ENCODE measurements at regions of chr15 and their contacts with region 1.

Region 1: DNA sequence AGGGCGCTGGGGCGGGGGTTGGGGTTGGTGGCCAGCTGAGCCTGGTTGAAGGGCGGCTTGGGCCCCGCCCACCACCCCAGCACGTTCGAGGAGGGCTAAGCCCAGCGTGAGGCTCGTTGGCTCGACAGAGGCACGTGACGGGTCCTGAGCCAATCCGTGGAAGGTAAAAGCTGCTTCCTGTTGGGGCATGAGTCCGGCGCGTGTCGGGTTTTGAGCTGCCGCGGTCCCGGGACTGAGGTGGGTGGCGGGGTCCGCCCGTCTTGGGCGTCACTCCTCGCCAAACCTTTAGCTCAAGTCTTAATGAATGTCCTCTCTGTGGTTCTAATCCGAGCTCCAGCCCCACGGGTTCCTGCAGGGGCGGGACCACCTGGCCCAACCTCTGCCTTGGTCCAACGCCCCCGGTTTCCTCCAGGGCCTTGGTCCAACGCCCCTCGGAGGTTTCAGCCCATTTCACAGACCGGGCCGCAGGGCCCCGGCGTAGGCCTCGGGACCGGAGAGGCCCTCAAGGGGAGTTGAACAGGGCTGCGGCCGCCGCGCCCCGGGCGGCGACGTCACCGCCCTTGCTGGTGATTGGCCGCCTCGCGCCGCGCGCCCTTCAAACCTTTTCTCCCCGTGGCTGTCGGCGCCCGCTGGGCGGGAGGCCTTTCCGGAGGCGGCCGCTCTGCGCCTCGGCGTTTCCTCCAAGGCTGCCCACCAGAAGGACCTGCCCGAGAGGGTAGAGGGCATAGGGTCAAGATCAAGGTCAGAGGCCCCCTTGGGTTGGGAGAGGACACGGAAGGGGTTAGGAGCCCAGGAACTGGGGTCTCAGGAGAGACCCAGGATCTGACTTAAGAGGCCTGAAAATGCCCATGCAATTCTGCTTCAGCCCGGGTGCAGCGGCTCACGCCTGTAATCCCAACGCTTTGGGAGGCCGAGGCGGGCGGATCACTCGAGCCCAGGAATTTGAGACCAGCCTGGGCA is at the start of gene RCCD1:
- DNase-seq: peak; percentile 97
- H3K4me3 ChIP-seq: peak within 1 kb of the TSS; percentile 76
- H3K27ac ChIP-seq: peak within 1 kb of the TSS; percentile 98
- H3K4me1 ChIP-seq: peaks cover 15% of the 10 kb centered on the region
- H3K27me3 ChIP-seq: no peaks in the 10 kb centered on the region
- CTCF ChIP-seq: no peak
- total RNA-seq, gene RCCD1: 28.8 and 39.5 TPM in 2 replicates

Region 2: GRCh38 chr15:90320061-90320884 is 634.7 kb before region 1 on chr15:
- CTCF ChIA-PET with region 1: no interaction called
- POLR2A ChIA-PET with region 1: interaction called, 10 read pairs
- intact Hi-C with region 1: no loop called
- DNase-seq: peak; percentile 93
- H3K4me3 ChIP-seq: no peak overlapping the region
- H3K27ac ChIP-seq: no peak overlapping the region
- H3K4me1 ChIP-seq: peaks cover 7% of the 10 kb centered on the region
- H3K27me3 ChIP-seq: no peaks in the 10 kb centered on the region
- CTCF ChIP-seq: peak; percentile 99

Region 3: GRCh38 chr15:90931737-90932659 is 23.0 kb before region 1 on chr15 and contains the start of gene HDDC3:
- CTCF ChIA-PET with region 1: interaction called, 26 read pairs
- POLR2A ChIA-PET with region 1: interaction called, 3 read pairs
- intact Hi-C with region 1: loop called (anchors 1 kb)
- DNase-seq: peak; percentile 88
- H3K4me3 ChIP-seq: peak within 1 kb of the TSS; percentile 96
- H3K27ac ChIP-seq: peak within 1 kb of the TSS; percentile 86
- H3K4me1 ChIP-seq: peaks cover 27% of the 10 kb centered on the region
- H3K27me3 ChIP-seq: no peaks in the 10 kb centered on the region
- CTCF ChIP-seq: peak; percentile 97
- total RNA-seq, gene HDDC3: 22.6 and 23.9 TPM in 2 replicates

Region 4: DNA sequence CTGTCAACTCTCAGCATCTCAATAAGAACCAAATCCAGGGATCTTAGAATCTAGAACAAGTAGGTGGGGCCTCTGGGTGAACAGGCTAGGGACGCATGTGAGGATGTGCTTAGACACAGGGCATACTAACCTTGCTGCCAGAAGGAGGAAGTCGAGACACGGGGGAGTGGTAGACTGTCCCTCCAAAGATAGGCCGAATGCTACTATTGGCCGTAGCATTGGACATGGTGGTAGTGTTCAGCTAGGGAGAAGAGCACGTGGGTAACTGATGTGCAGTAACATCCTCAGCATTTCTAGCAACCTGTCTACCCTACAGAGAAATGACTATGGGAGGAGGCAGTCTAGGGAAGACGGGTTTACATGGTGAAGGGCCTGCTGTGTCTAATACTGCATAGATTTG is 15.3 kb after region 1 on chr15:
- CTCF ChIA-PET with region 1: interaction called, 13 read pairs
- POLR2A ChIA-PET with region 1: interaction called, 3 read pairs
- intact Hi-C with region 1: no loop called
- DNase-seq: no peak
- H3K4me3 ChIP-seq: no peak overlapping the region
- H3K27ac ChIP-seq: no peak overlapping the region
- H3K4me1 ChIP-seq: no peaks in the 10 kb centered on the region
- H3K27me3 ChIP-seq: no peaks in the 10 kb centered on the region
- CTCF ChIP-seq: no peak

Region 5: DNA sequence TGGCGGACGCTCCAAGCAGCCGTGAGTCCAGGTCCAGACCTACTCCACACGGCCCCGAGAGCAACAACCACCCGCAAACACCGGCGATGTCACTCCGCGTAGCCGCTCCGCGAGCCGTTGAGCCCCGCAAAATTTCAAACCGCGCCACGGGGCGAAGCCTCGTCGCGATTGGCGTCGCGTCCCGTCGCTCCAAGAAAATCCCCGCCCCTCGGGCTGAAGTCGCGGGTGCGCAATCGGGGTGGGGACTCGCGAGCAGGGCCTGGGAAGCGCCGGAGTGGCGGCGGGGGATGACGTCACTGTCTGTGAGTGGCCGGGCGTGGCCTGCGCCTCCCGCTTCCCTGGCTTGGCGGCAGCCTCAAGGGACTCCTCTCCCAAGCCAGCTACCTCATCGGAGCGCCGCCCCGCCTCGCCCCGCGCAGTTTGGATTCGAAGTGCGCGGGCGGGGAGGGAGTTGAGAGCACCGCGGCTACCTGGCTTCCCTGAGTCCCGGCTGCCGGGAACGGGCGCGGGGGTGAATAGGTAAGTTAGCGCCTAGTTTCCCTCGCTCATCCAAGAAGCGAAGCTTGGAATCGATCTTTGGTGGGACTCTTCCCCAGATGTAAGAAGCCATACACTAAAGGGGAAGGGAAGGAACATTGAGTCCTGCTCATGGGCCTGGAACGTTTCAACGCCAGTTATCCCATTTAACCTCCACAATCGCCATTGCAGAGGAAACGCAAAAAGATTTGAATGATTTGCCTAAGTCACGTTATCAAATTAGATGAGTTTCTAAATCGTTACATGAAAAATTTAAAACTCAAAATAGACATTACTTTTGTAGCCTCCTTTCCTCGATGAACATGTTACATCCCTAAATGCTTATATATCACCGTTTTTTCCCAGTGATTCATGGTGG is 39.7 kb after region 1 on chr15 and contains the start of gene PRC1:
- CTCF ChIA-PET with region 1: interaction called, 3 read pairs
- POLR2A ChIA-PET with region 1: interaction called, 4 read pairs
- intact Hi-C with region 1: loop called (anchors 5 kb)
- DNase-seq: peak; percentile 99
- H3K4me3 ChIP-seq: peak within 1 kb of the TSS; percentile 99
- H3K27ac ChIP-seq: peak within 1 kb of the TSS; percentile 95
- H3K4me1 ChIP-seq: peaks cover 15% of the 10 kb centered on the region
- H3K27me3 ChIP-seq: no peaks in the 10 kb centered on the region
- CTCF ChIP-seq: no peak
- total RNA-seq, gene PRC1: 338 and 339 TPM in 2 replicates

Region 6: DNA sequence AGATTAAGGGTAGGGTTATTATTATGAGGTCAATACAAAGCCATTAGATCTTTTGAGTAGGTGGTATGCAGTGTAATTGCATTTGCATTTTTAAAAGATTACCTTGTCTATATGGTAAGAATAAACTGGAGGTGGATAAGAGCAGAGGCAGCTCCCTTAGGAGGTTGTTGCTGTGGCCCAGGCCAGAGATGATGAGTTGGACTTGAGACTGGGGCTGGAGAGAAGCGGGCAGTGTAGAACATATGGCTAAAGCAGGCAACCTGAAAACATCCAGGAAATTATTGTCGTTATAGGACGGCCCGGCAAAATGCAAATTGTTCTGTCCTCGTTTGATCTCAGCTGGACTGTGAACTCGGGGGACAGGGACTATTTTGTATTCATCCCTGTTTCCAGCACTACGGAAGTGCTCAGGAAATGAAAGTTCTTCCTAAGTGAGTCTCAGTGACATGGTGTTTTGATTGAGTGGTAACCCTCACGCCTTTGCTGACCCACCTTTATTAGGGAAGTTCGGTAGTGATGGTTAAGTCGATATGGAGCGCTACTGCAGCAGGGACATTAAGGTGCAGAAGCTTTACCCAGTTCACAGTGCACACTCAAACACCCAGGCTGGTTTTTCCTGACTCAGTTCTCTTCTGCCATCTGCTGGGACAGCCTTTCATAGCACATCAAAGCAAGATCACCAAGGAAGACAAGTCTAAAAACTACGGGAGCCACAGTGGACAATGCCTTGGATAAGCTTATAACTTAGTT is 94.6 kb after region 1 on chr15:
- CTCF ChIA-PET with region 1: interaction called, 12 read pairs
- POLR2A ChIA-PET with region 1: no interaction called
- intact Hi-C with region 1: loop called (anchors 1 kb)
- DNase-seq: peak; percentile 76
- H3K4me3 ChIP-seq: no peak overlapping the region
- H3K27ac ChIP-seq: no peak overlapping the region
- H3K4me1 ChIP-seq: peaks cover 3% of the 10 kb centered on the region
- H3K27me3 ChIP-seq: no peaks in the 10 kb centered on the region
- CTCF ChIP-seq: peak; percentile 77

Region 7: GRCh38 chr15:91151781-91152563 is 197.0 kb after region 1 on chr15:
- CTCF ChIA-PET with region 1: no interaction called
- POLR2A ChIA-PET with region 1: no interaction called
- intact Hi-C with region 1: no loop called
- DNase-seq: no peak
- H3K4me3 ChIP-seq: no peak overlapping the region
- H3K27ac ChIP-seq: no peak overlapping the region
- H3K4me1 ChIP-seq: no peaks in the 10 kb centered on the region
- H3K27me3 ChIP-seq: peaks cover 12% of the 10 kb centered on the region
- CTCF ChIP-seq: no peak

Region 8: DNA sequence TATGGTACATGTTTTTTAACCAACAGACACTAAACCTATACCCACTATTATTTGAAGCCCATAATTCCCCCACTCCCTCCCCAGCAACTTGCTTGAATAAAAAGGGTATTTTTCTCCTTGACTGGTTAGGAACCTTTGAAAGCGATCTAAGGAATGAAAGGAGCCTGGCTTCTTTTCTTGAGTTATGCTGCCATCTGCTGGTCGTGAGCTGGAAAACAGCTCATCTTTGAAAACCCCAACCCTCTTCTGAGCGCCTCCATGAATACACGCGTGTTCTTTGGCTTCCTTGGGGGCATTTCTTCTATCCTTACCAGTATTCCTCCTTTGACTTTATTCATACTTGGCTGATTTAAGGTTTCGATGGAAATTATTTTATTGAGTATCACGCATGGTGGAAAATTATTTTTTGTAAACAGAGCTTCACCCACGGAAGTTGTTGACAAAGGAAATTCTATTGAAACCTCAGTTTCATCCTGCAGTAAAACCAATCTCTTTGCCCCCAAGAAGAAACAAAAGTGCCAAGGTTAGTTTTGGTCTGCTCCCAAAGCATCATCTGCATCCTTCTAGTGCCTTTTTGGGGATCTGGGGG is 316.7 kb after region 1 on chr15:
- CTCF ChIA-PET with region 1: interaction called, 11 read pairs
- POLR2A ChIA-PET with region 1: no interaction called
- intact Hi-C with region 1: loop called (anchors 2 kb)
- DNase-seq: peak; percentile 81
- H3K4me3 ChIP-seq: no peak overlapping the region
- H3K27ac ChIP-seq: no peak overlapping the region
- H3K4me1 ChIP-seq: no peaks in the 10 kb centered on the region
- H3K27me3 ChIP-seq: no peaks in the 10 kb centered on the region
- CTCF ChIP-seq: peak; percentile 88